CD8-positive, alpha-beta T cell (primary cell): ENCODE measurements at regions of chr4 and their contacts with region 1.

Region 1: DNA sequence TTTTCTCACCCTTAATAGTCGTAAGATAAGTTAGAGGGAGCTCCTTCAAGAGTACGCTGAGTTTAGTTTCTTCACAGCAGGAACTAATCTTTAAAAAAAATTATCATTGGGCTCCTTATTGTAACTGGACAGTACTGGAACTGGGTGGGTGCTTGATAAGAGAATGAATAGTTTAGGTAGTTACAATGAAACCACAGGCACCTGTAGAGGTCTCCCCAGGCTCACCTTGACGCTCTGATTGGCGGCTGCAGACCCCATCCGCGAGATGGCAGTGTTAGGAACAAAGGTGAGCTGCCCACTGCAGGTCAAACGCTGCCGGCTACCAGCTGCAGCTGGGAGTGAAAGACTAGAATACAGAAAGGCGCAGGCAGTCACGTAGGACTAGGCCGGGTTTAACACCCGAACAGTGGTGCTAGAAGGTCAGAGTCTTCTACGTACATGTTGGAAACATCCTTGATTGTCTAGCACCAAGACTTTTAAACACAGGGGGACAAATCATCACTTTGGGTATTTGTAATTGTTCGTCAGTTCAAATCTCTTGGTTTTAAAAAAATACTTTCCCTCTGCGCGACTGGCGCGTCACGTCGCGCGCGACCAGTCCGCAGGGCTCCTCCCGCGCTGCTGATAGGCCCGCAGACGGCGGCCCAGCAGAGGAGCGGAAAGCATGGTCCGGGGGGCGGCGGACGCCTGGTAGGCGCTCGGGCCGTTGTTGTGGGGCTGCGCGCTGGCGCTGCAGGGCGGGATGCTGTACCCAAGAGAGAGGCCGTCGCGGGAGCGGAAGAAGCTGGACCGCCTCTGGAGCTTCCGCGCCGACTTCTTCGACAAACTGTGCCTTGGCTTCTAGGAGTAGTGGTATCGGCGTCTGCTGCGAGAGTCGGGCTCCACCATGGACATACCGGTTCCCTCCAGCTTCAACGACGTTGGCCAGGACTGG is 45.6 kb downstream of the SMARCA5 start:
- DNase-seq: peak; percentile 42 to 84 (median 71)
- ATAC-seq: peak; percentile 78
- H3K4me3 ChIP-seq: peak overlapping the region; percentile 56 to 75
- H3K4me3 Mint-ChIP-seq: peak overlapping the region; percentile 93
- H3K27ac ChIP-seq: peak overlapping the region; percentile 49 to 70
- H3K27ac Mint-ChIP-seq: peak overlapping the region; percentile 90
- H3K4me1 ChIP-seq: peaks cover 8% of the 10 kb centered on the region
- H3K4me1 Mint-ChIP-seq: peaks cover 18% of the 10 kb centered on the region
- H3K27me3 ChIP-seq: no peaks in the 10 kb centered on the region
- H3K27me3 Mint-ChIP-seq: no peaks in the 10 kb centered on the region
- CTCF ChIP-seq: peak; percentile 37

Region 2: GRCh38 chr4:143513306-143514168 is 45.6 kb before region 1 on chr4 and contains the start of gene SMARCA5:
- CTCF ChIA-PET with region 1: interaction called, 4 read pairs
- POLR2A ChIA-PET with region 1: interaction called, 4 read pairs
- intact Hi-C with region 1: loop called (anchors 2 kb)
- DNase-seq: peak; percentile 88 to 100 (median 93)
- ATAC-seq: peak; percentile 86
- H3K4me3 ChIP-seq: peak within 1 kb of the TSS; percentile 68 to 88
- H3K4me3 Mint-ChIP-seq: peak within 1 kb of the TSS; percentile 99
- H3K27ac ChIP-seq: peak within 1 kb of the TSS; percentile 96 to 99
- H3K27ac Mint-ChIP-seq: peak within 1 kb of the TSS; percentile 100
- H3K4me1 ChIP-seq: peaks cover 38% of the 10 kb centered on the region
- H3K4me1 Mint-ChIP-seq: peaks cover 42% of the 10 kb centered on the region
- H3K27me3 ChIP-seq: no peaks in the 10 kb centered on the region
- H3K27me3 Mint-ChIP-seq: no peaks in the 10 kb centered on the region
- CTCF ChIP-seq: no peak
- total RNA-seq, gene SMARCA5: 57.9 to 63.1 TPM

Region 3: GRCh38 chr4:143538979-143539669 is 20.0 kb before region 1 on chr4:
- CTCF ChIA-PET with region 1: interaction called, 12 read pairs
- POLR2A ChIA-PET with region 1: no interaction called
- intact Hi-C with region 1: no loop called
- DNase-seq: peak in 2 of 9 experiments; percentile 27 to 52
- ATAC-seq: no peak
- H3K4me3 ChIP-seq: no peak overlapping the region
- H3K4me3 Mint-ChIP-seq: no peak overlapping the region
- H3K27ac ChIP-seq: no peak overlapping the region
- H3K27ac Mint-ChIP-seq: no peak overlapping the region
- H3K4me1 ChIP-seq: no peaks in the 10 kb centered on the region
- H3K4me1 Mint-ChIP-seq: peaks cover 12% of the 10 kb centered on the region
- H3K27me3 ChIP-seq: no peaks in the 10 kb centered on the region
- H3K27me3 Mint-ChIP-seq: no peaks in the 10 kb centered on the region
- CTCF ChIP-seq: no peak

Region 4: DNA sequence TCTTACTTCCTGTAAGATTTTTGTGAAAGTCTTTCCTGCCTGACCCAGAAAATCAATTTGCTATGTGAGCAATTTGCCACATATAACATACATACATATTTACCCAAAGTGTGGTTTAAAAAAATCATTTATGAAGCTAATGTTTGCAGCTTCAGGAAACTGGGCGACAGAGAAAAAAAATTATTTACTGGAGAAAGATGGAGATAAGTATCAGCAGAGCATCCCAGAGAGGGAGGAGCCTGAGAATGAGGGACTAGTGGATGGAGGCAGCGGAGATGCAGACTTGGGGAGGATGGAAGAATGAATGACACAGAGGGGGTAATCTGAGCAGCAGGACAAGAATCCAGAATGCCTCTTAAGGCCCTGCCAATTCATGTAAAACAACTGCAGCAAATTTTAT is 582.4 kb after region 1 on chr4:
- CTCF ChIA-PET with region 1: no interaction called
- POLR2A ChIA-PET with region 1: no interaction called
- intact Hi-C with region 1: loop called in 1 of 2 experiments (anchors 10 kb)
- DNase-seq: no peak
- ATAC-seq: no peak
- H3K4me3 ChIP-seq: no peak overlapping the region
- H3K4me3 Mint-ChIP-seq: no peak overlapping the region
- H3K27ac ChIP-seq: no peak overlapping the region
- H3K27ac Mint-ChIP-seq: no peak overlapping the region
- H3K4me1 ChIP-seq: no peaks in the 10 kb centered on the region
- H3K4me1 Mint-ChIP-seq: no peaks in the 10 kb centered on the region
- H3K27me3 ChIP-seq: no peaks in the 10 kb centered on the region
- H3K27me3 Mint-ChIP-seq: peaks cover 3% of the 10 kb centered on the region
- CTCF ChIP-seq: no peak

Region 5: DNA sequence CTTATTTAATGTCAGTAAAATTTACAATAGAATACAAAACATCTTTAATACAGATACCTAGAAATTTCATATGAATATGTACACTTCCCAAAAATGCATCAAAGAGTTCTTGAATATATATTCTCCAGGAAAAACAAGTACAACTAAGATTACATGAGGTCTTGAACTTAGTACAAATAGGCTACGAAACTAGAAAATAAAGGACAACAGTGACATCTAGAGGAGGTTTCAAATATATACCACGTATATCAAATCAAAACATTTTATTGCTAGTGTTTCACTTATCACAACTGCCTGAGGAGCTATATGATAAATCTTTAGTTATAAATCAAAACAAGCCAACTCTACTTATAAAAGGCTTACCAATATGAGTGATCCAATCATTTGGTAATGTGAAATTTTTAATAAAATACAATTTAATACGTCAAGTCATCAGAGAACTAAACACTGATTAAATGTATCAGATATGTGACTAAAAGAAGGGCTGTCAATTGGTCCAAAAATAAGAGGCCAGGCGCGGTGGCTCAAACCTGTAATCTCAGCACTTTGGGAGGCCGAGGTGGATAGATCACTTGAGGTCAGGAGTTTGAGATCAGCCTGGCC is 1502.3 kb after region 1 on chr4:
- CTCF ChIA-PET with region 1: interaction called, 3 read pairs
- POLR2A ChIA-PET with region 1: no interaction called
- intact Hi-C with region 1: loop called in 1 of 2 experiments (anchors 2 kb)
- DNase-seq: peak in 2 of 9 experiments; percentile 52 to 65
- ATAC-seq: no peak
- H3K4me3 ChIP-seq: no peak overlapping the region
- H3K4me3 Mint-ChIP-seq: no peak overlapping the region
- H3K27ac ChIP-seq: no peak overlapping the region
- H3K27ac Mint-ChIP-seq: no peak overlapping the region
- H3K4me1 ChIP-seq: peaks cover 3% of the 10 kb centered on the region
- H3K4me1 Mint-ChIP-seq: peaks cover 27% of the 10 kb centered on the region
- H3K27me3 ChIP-seq: no peaks in the 10 kb centered on the region
- H3K27me3 Mint-ChIP-seq: no peaks in the 10 kb centered on the region
- CTCF ChIP-seq: peak; percentile 69